K562 (cell line): ENCODE measurements at regions of chr22 and their contacts with region 1.

Region 1: GRCh38 chr22:30104501-30105156 is 24.4 kb downstream of the HORMAD2 start:
- DNase-seq: no peak
- ATAC-seq: no peak
- H3K4me3 ChIP-seq: no peak overlapping the region
- H3K27ac ChIP-seq: no peak overlapping the region
- H3K4me1 ChIP-seq: no peaks in the 10 kb centered on the region
- H3K27me3 ChIP-seq: no peaks in the 10 kb centered on the region
- CTCF ChIP-seq: no peak
- EP300 ChIP-seq: no peak
- POLR2A ChIP-seq: no peak
- RAD21 ChIP-seq: no peak

Region 2: DNA sequence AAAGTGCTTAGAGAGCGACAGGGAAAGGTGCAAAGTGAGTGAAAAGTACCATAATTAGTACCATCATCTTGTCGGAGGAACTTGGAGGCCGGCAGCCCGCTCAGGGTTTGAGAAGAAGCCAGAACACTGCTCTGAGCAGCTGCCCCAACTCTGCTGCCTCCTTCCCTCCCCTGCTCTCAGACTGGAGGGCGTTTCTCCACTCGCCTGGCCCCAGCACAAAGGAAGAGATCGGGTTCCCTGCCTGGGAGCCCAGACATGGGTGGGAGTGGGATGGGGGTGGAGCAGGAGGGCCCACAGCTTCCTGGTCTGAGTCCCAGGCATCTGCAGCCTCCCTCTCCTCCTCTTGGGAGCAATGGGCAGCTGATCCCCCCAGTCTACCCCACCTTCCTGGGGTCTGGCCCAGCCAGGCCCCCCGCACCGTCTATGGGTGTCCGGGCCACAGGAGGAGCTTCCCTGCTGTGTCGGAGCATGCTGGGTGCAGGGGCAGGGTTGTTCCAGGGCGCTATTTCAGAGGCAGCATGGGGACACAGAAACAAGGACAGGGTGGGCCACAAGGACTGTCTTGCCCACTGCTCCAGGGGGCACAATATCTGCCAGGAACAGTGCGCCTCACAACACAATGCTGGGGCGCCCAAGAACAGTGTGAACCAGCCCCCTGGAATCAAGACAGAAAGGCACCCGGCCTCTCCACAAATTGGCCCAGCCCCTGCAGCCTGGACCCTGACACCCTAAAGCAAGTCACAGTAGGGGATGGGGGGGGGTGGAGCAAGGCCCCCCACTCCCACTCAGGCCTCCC is 137.1 kb after region 1 on chr22:
- CTCF ChIA-PET with region 1: no interaction called
- POLR2A ChIA-PET with region 1: no interaction called
- in situ Hi-C with region 1: loop called (anchors 5 kb)
- intact Hi-C with region 1: no loop called
- DNase-seq: no peak
- ATAC-seq: no peak
- H3K4me3 ChIP-seq: no peak overlapping the region
- H3K27ac ChIP-seq: no peak overlapping the region
- H3K4me1 ChIP-seq: peaks cover 3 to 23% of the 10 kb centered on the region in 2 experiments; a peak in 3 of 5 replicates
- H3K27me3 ChIP-seq: peaks cover 0 to 37% of the 10 kb centered on the region in 2 experiments; a peak in 2 of 5 replicates
- CTCF ChIP-seq: no peak
- EP300 ChIP-seq: no peak
- POLR2A ChIP-seq: no peak
- RAD21 ChIP-seq: no peak

Region 3: GRCh38 chr22:30253205-30253852 is 148.7 kb after region 1 on chr22:
- CTCF ChIA-PET with region 1: interaction called, 4 read pairs
- POLR2A ChIA-PET with region 1: no interaction called
- in situ Hi-C with region 1: no loop called
- intact Hi-C with region 1: loop called (anchors 1 kb)
- DNase-seq: no peak
- ATAC-seq: no peak
- H3K4me3 ChIP-seq: no peak overlapping the region
- H3K27ac ChIP-seq: no peak overlapping the region
- H3K4me1 ChIP-seq: peaks cover 0 to 44% of the 10 kb centered on the region in 2 experiments; a peak in 2 of 5 replicates
- H3K27me3 ChIP-seq: peaks cover 0 to 3% of the 10 kb centered on the region in 2 experiments; a peak in 1 of 5 replicates
- CTCF ChIP-seq: no peak
- EP300 ChIP-seq: no peak
- POLR2A ChIP-seq: no peak
- RAD21 ChIP-seq: no peak